Gastrocnemius medialis (tissue), 4 donors: ENCODE measurements at regions of chr1 and their contacts with region 1.

Region 1: DNA sequence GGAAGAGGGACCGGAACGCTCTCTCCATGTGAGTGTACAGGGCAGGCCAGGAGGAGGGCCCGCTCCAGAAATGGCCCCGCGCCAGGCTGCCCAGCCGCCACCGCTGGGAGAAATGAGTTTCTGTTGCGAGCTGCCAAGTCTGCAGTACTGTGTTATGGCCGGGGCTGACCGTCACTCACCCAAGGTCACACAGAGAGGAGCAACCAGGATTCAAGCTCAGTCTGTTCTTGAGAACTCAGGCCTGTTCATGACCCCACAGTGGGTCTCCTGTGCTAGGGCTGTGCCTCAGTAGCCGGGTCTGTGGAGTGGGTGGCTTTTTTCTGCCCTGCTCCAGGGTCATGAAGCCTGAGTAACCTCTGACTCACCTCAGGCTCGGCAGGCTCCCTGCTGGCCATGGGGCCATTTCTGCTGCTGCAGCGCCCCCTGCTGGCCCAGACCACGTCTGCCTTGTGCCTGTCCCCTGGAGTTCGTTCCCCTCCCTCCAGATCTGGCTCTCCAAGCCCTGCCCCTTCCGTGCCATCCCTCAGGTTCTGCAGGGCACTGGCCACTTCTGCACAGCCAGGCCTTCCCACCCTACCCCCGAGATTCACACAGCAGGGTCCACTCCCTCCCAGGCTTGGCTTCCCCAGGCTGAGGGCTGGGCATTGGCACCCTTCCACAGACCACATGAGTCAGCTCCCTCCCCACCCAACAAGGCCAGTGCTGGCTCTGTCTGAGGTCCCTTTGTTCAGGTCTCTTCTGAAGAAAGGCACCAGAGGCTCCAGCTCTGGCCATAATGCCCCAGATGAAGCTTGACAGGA is 51.8 kb downstream of the EDN2 start:
- DNase-seq: peak; percentile 81 to 94
- ATAC-seq: peak; percentile 91 to 96
- H3K4me3 ChIP-seq: peak overlapping the region in 2 of 4 donors; percentile 11 to 29
- H3K27ac ChIP-seq: peak overlapping the region; percentile 55 to 70 (median 67)
- H3K4me1 ChIP-seq: peaks cover 14 to 19% of the 10 kb centered on the region in 2 donors
- H3K27me3 ChIP-seq: no peaks in the 10 kb centered on the region
- CTCF ChIP-seq: peak; percentile 91 to 99 (median 97)
- POLR2A ChIP-seq: no peak

Region 2: DNA sequence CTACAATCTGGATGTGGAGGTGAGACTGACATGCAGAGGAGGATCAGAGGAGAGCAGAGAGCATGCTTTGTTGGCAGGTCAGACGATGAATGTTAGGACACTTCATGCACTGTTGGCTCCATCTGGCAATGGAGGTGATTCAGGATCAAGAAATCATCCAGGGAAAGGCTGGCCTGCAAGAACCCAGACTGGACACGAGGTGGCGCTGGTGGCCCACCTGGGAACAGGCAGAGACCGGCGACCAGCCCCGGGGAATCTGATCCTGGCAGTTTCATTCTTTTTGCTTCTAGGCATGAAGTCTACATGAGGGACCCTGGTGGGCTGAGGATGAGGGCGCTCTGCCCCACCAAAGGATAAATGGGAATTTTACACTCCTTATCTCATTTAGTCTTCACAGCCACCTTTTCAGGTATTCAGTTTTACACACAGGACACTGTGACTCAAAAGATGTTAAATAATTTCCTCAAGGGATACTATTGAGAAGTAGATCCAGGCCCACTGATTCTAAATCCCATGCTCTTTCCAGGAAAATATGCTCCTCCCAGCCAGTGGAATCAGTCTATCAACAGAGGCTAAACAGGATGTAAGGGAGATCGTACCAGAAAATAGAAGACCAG is 164.4 kb before region 1 on chr1:
- in situ Hi-C with region 1: loop called (anchors 5 kb)
- intact Hi-C with region 1: loop called (anchors 1 kb)
- DNase-seq: peak; percentile 45 to 71
- ATAC-seq: peak; percentile 76 to 90
- H3K4me3 ChIP-seq: no peak overlapping the region
- H3K27ac ChIP-seq: no peak overlapping the region
- H3K4me1 ChIP-seq: peaks cover 0 to 3% of the 10 kb centered on the region in 2 donors
- H3K27me3 ChIP-seq: no peaks in the 10 kb centered on the region
- CTCF ChIP-seq: peak; percentile 90 to 99 (median 95)
- POLR2A ChIP-seq: no peak

Region 3: GRCh38 chr1:41282679-41283317 is 149.9 kb before region 1 on chr1:
- in situ Hi-C with region 1: no loop called
- intact Hi-C with region 1: loop called (anchors 5 kb)
- DNase-seq: no peak
- ATAC-seq: peak in 1 of 2 donors; percentile 71
- H3K4me3 ChIP-seq: no peak overlapping the region
- H3K27ac ChIP-seq: no peak overlapping the region
- H3K4me1 ChIP-seq: no peaks in the 10 kb centered on the region
- H3K27me3 ChIP-seq: no peaks in the 10 kb centered on the region
- CTCF ChIP-seq: peak; percentile 62 to 74 (median 65)
- POLR2A ChIP-seq: no peak

Region 4: DNA sequence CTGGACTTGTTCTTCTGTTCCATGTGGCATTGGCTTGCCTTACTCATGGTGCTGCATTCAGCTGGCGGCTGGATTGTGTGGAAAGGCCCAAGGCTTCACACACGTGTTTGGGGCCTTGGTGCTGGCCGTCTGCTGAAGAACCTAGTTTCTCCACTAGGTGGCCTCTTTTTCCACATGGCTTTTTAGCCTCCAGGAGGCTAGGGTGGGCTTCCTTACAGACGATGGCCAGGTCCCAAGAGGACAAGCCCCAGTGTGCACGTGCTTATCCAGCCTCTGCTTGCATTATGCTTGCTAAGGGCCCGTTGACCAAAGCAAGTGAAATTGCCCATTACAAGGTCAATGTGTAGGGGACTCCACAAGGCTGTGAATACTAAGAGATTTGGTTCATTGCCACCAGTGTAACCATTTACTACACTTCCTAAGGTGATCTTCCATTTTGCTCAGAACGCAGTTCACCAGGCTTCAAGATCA is 119.0 kb before region 1 on chr1:
- in situ Hi-C with region 1: loop called in 1 of 4 experiments (anchors 10 kb)
- intact Hi-C with region 1: no loop called
- DNase-seq: no peak
- ATAC-seq: no peak
- H3K4me3 ChIP-seq: no peak overlapping the region
- H3K27ac ChIP-seq: no peak overlapping the region
- H3K4me1 ChIP-seq: no peaks in the 10 kb centered on the region
- H3K27me3 ChIP-seq: no peaks in the 10 kb centered on the region
- CTCF ChIP-seq: peak in 4 of 5 experiments; percentile 32 to 51 (median 40)
- POLR2A ChIP-seq: no peak

Region 5: GRCh38 chr1:41322835-41323627 is 109.7 kb before region 1 on chr1:
- in situ Hi-C with region 1: loop called in 2 of 4 experiments (anchors 10 kb)
- intact Hi-C with region 1: loop called (anchors 5 kb)
- DNase-seq: peak; percentile 47 to 75
- ATAC-seq: peak; percentile 78 to 83
- H3K4me3 ChIP-seq: no peak overlapping the region
- H3K27ac ChIP-seq: no peak overlapping the region
- H3K4me1 ChIP-seq: peaks cover 13 to 28% of the 10 kb centered on the region in 2 donors
- H3K27me3 ChIP-seq: no peaks in the 10 kb centered on the region
- CTCF ChIP-seq: peak; percentile 72 to 86 (median 75)
- POLR2A ChIP-seq: no peak

Region 6: DNA sequence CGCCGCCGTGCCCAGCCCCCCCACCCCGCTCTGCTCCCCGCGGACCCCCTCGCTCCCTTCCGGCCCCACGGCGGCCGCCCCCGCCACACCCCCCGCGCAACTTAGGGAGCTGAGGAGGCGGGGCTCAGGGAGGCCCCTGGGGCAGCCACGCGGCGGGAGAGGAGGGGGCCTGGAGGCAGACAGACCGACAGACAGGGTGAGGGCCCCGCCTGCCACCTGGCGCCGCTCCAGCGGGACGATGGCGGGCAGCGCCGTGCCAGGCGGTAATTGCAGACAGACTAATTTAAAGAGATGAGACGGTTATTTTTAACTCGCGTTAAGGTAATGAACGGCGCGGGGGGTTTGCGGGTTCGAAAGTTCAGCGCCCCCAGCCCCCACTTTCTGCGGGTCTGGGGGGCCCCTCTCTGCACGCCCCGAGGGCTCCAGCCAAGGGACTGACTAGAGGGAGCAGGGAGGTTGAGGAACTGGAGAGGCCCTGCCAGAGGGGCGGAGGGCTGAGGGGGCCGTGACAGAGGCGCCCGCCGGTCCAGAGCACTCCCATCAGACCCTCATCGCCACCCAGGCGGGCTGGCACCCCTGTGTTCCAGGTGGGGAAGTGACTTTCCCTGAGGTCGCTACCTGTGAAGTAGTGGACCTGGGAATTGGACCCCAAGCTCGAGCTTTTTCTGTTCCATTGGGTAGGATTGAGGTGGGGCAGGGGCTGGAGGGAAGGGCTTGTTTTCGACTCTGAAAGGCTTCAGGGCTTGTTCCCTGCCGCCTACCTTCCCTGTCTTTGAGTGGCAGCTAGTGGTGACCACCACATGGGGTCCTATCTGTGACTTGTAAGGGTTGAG is 66.0 kb before region 1 on chr1:
- in situ Hi-C with region 1: no loop called
- intact Hi-C with region 1: loop called (anchors 2 kb)
- DNase-seq: no peak
- ATAC-seq: no peak
- H3K4me3 ChIP-seq: peak overlapping the region; percentile 47 to 62 (median 58)
- H3K27ac ChIP-seq: peak overlapping the region; percentile 36 to 64 (median 50)
- H3K4me1 ChIP-seq: peaks cover 23 to 37% of the 10 kb centered on the region in 2 donors
- H3K27me3 ChIP-seq: no peaks in the 10 kb centered on the region
- CTCF ChIP-seq: no peak
- POLR2A ChIP-seq: no peak

Region 7: GRCh38 chr1:41455479-41456332 is 23.0 kb after region 1 on chr1:
- in situ Hi-C with region 1: no loop called
- intact Hi-C with region 1: no loop called
- DNase-seq: no peak
- ATAC-seq: no peak
- H3K4me3 ChIP-seq: no peak overlapping the region
- H3K27ac ChIP-seq: no peak overlapping the region
- H3K4me1 ChIP-seq: peaks cover 7 to 12% of the 10 kb centered on the region in 2 donors
- H3K27me3 ChIP-seq: no peaks in the 10 kb centered on the region
- CTCF ChIP-seq: no peak
- POLR2A ChIP-seq: no peak